Lower leg skin (tissue), 4 donors: ENCODE measurements at regions of chr14 and their contacts with region 1.

Region 1: GRCh38 chr14:105709281-105710118 is 183.1 kb downstream of the TMEM121 start:
- DNase-seq: peak in 1 of 2 donors; percentile 61
- H3K4me3 ChIP-seq: no peak overlapping the region
- CTCF ChIP-seq: no peak
- POLR2A ChIP-seq: no peak

Region 2: GRCh38 chr14:105503935-105504692 is 205.4 kb before region 1 on chr14:
- intact Hi-C with region 1: no loop called
- DNase-seq: no peak
- H3K4me3 ChIP-seq: no peak overlapping the region
- CTCF ChIP-seq: no peak
- POLR2A ChIP-seq: no peak

Region 3: DNA sequence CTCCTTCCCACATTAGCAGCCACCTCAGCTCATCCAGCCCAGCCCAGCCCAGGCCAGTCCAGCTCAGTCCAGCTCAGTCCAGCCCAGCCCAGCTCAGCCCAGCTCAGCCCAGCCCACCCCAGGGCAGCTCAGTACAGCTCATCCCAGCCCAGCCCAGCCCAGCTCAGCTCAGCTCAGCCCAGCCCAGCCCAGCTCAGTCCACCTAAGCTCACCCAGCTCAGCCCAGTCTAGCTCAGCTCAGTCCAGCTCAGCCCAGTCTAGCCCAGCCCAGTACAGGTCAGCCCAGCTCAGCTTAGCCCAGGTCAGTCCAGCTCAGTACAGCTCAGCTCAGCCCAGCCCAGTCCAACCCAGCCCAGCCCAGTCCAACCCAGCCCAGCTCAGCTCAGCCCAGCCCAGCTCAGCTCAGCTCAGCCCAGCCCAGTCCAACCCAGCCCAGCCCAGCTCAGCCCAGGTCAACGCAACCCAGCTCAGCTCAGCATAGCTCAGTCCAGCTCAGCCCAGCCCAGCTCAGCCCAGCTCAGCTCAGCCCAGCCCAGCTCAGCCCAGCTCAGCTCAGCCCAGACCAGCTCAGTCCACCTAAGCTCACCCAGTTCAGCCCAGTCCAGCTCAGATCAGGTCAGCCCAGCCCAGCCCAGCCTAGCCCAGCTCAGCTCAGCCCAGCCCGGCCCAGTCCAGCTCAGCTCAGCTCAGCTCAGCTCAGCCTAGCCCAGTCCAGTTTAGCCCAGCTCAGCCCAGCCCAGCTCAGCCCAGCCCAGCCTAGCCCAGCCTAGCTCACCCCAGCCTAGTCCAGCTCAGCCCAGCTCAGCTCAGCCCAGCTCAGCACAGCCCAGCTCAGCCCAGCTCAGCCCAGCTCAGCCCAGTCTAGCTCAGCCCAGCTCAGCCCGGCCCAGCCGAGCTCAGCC is 120.1 kb before region 1 on chr14:
- intact Hi-C with region 1: loop called (anchors 5 kb)
- DNase-seq: no peak
- H3K4me3 ChIP-seq: no peak overlapping the region
- CTCF ChIP-seq: no peak
- POLR2A ChIP-seq: no peak